ENCODE measurements at regions of chr21 and their contacts with region 1.

Region 1: DNA sequence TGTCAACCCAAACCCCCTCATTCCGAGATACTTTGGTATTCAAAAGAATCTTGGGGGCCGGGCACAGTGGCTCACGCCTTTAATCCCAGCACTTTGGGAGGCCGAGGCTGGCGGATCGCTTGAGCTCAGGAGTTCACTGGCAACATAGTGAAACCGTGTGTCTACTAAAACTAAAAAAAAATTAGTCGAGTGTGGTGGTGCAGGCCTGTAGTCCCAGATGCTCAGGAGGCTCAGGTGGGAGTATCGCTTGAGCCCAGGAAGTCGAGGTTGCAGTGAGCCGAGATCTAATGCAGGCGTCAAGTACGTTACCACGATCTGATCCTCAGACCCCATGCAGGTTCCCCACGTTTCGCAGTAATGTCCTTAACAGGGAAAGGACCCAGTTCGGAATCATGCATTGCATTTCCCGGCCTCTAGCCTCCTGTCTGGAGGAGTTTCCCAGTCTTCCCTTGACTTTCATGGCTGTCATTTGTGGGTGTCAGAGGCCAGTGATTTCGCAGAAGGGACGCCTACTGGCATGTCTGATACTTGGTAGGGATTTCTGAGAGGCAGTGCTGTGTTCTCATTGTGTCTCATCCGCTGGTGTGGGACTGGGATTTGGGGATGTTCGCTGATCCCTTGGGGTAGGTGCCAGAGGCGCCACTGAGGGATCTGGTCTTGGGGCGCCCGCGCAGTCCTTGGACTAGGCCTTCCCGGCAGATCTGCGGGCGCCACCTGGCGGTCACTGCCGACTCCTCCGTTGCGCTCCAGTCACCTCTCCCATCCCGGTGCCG is 39.3 kb upstream of the HMGN1 start:
- DNase-seq: peak; percentile 91
- ATAC-seq: peak; percentile 89
- H3K4me3 Mint-ChIP-seq: peak overlapping the region; percentile 85
- H3K27ac Mint-ChIP-seq: peak overlapping the region; percentile 89
- H3K4me1 Mint-ChIP-seq: peaks cover 38% of the 10 kb centered on the region
- H3K27me3 Mint-ChIP-seq: no peaks in the 10 kb centered on the region

Region 2: GRCh38 chr21:39183237-39184007 is 204.8 kb before region 1 on chr21 and contains the start of gene PSMG1:
- CTCF ChIA-PET with region 1: interaction called, 11 read pairs
- POLR2A ChIA-PET with region 1: interaction called, 7 read pairs
- DNase-seq: peak; percentile 95
- ATAC-seq: peak; percentile 94
- H3K4me3 Mint-ChIP-seq: peak within 1 kb of the TSS; percentile 97
- H3K27ac Mint-ChIP-seq: peak within 1 kb of the TSS; percentile 98
- H3K4me1 Mint-ChIP-seq: peaks cover 35% of the 10 kb centered on the region
- H3K27me3 Mint-ChIP-seq: no peaks in the 10 kb centered on the region
- total RNA-seq, gene PSMG1: 69.0 to 74.5 TPM

Region 3: DNA sequence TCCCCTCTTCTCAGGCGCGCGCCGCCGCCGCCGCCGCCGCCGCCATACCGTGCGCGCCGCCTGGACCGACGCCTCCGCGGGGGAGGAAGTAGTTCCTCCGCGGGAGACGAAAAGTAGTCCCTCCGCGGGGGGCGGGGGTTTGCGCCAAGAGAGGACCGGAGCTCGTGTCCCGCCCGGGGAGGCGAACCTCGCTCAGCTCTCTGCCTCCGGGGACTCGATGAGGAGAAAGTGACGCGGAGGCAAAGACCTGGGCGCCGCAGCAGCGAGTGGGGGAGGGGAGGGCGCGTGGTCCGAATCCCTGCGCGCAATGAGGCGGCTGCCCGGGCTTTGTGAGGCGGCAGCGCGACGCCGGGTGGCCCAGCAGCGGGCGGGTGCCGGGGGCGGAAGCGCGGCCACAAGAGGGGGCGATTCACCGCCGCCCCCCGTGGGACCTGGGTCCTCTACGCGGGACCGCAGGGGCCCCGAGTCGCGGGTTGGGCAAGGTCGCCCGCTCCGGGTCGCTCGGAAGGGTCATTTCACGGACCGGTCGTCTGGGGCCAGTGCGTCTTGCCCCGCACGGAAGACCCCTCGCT is 74.6 kb before region 1 on chr21 and contains the start of gene BRWD1:
- CTCF ChIA-PET with region 1: interaction called, 3 read pairs
- POLR2A ChIA-PET with region 1: interaction called, 13 read pairs
- DNase-seq: peak; percentile 78
- ATAC-seq: peak; percentile 62
- H3K4me3 Mint-ChIP-seq: peak within 1 kb of the TSS; percentile 87
- H3K27ac Mint-ChIP-seq: peak within 1 kb of the TSS; percentile 95
- H3K4me1 Mint-ChIP-seq: peaks cover 32% of the 10 kb centered on the region
- H3K27me3 Mint-ChIP-seq: peaks cover 8% of the 10 kb centered on the region
- total RNA-seq, gene BRWD1: 31.9 to 36.0 TPM

Region 4: GRCh38 chr21:39349211-39350093 is 38.8 kb before region 1 on chr21:
- CTCF ChIA-PET with region 1: interaction called, 20 read pairs
- POLR2A ChIA-PET with region 1: interaction called, 13 read pairs
- DNase-seq: peak; percentile 98
- ATAC-seq: peak; percentile 88
- H3K4me3 Mint-ChIP-seq: peak overlapping the region; percentile 98
- H3K27ac Mint-ChIP-seq: peak overlapping the region; percentile 100
- H3K4me1 Mint-ChIP-seq: peaks cover 38% of the 10 kb centered on the region
- H3K27me3 Mint-ChIP-seq: peaks cover 7% of the 10 kb centered on the region

Region 5: DNA sequence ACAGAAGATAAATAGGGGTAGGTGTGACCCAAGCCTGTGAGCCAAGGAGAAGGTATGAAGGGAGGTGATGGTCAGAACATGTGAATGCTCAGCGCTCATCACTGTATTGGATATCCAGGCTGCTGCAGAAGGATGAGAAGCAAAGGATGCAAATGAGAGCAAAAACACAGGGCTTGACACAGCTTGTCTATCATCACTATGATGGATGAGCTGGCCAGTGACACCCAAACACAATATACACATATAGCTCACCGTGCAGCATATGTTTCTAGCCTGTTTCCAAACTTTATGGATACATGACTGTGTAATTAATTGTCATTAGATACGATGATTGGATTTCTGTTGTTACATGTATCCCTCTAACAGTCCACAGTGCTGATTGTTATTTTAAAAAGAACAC is 25.5 kb before region 1 on chr21:
- CTCF ChIA-PET with region 1: no interaction called
- POLR2A ChIA-PET with region 1: no interaction called
- DNase-seq: no peak
- ATAC-seq: no peak
- H3K4me3 Mint-ChIP-seq: no peak overlapping the region
- H3K27ac Mint-ChIP-seq: no peak overlapping the region
- H3K4me1 Mint-ChIP-seq: no peaks in the 10 kb centered on the region
- H3K27me3 Mint-ChIP-seq: peaks cover 11% of the 10 kb centered on the region

Region 6: GRCh38 chr21:39373644-39374043 is 14.6 kb before region 1 on chr21:
- CTCF ChIA-PET with region 1: interaction called, 18 read pairs
- POLR2A ChIA-PET with region 1: no interaction called
- DNase-seq: peak; percentile 33
- ATAC-seq: peak; percentile 61
- H3K4me3 Mint-ChIP-seq: no peak overlapping the region
- H3K27ac Mint-ChIP-seq: no peak overlapping the region
- H3K4me1 Mint-ChIP-seq: peaks cover 4% of the 10 kb centered on the region
- H3K27me3 Mint-ChIP-seq: peaks cover 15% of the 10 kb centered on the region

Region 7: GRCh38 chr21:39422527-39423241 is 34.5 kb after region 1 on chr21:
- CTCF ChIA-PET with region 1: no interaction called
- POLR2A ChIA-PET with region 1: no interaction called
- DNase-seq: no peak
- ATAC-seq: no peak
- H3K4me3 Mint-ChIP-seq: no peak overlapping the region
- H3K27ac Mint-ChIP-seq: no peak overlapping the region
- H3K4me1 Mint-ChIP-seq: no peaks in the 10 kb centered on the region
- H3K27me3 Mint-ChIP-seq: no peaks in the 10 kb centered on the region

Region 8: GRCh38 chr21:39441502-39442475 is 53.6 kb after region 1 on chr21:
- CTCF ChIA-PET with region 1: interaction called, 15 read pairs
- POLR2A ChIA-PET with region 1: no interaction called
- DNase-seq: peak; percentile 53
- ATAC-seq: no peak
- H3K4me3 Mint-ChIP-seq: no peak overlapping the region
- H3K27ac Mint-ChIP-seq: no peak overlapping the region
- H3K4me1 Mint-ChIP-seq: peaks cover 15% of the 10 kb centered on the region
- H3K27me3 Mint-ChIP-seq: peaks cover 41% of the 10 kb centered on the region

Region 9: DNA sequence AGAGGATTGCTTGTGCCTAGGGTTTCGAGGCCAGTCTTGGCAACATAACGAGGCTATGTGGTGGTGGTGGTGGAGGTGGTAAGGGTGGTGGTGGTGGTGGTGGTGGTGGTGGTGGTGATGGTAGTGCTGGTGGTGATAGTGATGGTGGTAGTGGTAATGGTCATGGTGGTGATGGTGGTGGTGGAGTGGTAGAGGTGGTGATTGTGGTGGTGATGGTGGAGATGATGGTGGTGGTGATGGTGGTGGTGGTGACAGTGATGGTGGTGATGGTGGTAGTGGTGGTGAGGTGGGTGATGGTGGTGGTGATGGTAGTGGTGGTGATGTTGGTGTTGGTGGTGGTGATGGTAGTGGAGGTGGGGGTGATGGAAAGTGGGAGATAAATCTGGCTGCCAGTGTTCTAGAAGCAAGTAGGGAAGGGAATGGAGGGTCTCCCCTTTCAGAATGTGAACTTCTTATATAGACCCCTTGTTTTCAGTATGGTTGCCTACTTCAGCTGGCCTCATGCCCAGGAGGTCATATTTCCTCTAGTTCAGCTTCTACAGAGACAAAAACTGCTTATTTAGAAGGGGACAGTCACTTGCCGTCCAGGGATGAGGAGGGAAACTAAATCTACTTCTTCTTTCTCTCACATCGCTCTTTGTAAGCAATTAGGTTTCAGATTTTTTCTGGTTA is 91.1 kb after region 1 on chr21:
- CTCF ChIA-PET with region 1: no interaction called
- POLR2A ChIA-PET with region 1: no interaction called
- DNase-seq: no peak
- ATAC-seq: no peak
- H3K4me3 Mint-ChIP-seq: no peak overlapping the region
- H3K27ac Mint-ChIP-seq: peak overlapping the region; percentile 4
- H3K4me1 Mint-ChIP-seq: no peaks in the 10 kb centered on the region
- H3K27me3 Mint-ChIP-seq: no peaks in the 10 kb centered on the region

Region 10: DNA sequence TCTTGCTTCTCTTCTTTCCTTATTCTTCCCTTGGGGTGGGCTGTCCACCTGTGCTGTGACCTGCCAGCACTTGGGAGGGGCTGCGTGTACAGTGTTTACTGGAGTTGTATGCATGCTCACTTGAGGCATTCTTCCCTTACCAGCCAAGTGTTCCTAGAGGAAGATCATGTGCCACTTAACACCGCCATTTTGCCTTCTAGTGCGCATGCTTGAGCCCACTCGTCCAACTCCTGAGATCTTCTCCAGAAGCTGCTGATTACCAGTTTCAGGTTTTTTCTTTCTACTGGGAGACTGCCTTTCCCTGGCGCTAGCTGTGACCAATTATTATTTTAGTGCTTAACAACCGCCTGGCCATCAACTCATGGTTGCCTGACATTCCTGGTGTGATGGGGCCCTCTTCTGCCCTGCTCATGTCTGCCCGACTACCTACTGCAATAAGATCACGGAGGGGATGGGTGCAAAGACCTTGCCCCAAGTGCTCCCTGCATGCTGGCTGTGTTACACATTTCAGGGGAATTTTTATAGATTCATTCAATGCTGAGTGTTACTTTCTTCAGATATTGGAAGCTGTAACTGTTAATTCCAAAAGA is 150.3 kb after region 1 on chr21:
- CTCF ChIA-PET with region 1: no interaction called
- POLR2A ChIA-PET with region 1: no interaction called
- DNase-seq: no peak
- ATAC-seq: no peak
- H3K4me3 Mint-ChIP-seq: no peak overlapping the region
- H3K27ac Mint-ChIP-seq: no peak overlapping the region
- H3K4me1 Mint-ChIP-seq: no peaks in the 10 kb centered on the region
- H3K27me3 Mint-ChIP-seq: no peaks in the 10 kb centered on the region